Activated CD4-positive, alpha-beta T cell treated with anti-CD3 and anti-CD28 coated beads for 36 hours (primary cell): ENCODE measurements at regions of chr17 and their contacts with region 1.

Region 1: GRCh38 chr17:59331129-59331928 is at the start of gene YPEL2:
- DNase-seq: peak; percentile 93
- ATAC-seq: peak; percentile 95
- H3K4me3 Mint-ChIP-seq: peak within 1 kb of the TSS; percentile 81
- H3K27ac Mint-ChIP-seq: peak within 1 kb of the TSS; percentile 75
- H3K4me1 Mint-ChIP-seq: peaks cover 68% of the 10 kb centered on the region
- H3K27me3 Mint-ChIP-seq: no peaks in the 10 kb centered on the region
- total RNA-seq, gene YPEL2: 4.3 to 6.9 TPM

Region 2: GRCh38 chr17:59106463-59107305 is 224.6 kb before region 1 on chr17 and contains the start of gene TRIM37:
- CTCF ChIA-PET with region 1: no interaction called
- POLR2A ChIA-PET with region 1: no interaction called
- intact Hi-C with region 1: loop called in 1 of 2 experiments (anchors 5 kb)
- DNase-seq: peak; percentile 99
- ATAC-seq: peak; percentile 95
- H3K4me3 Mint-ChIP-seq: peak within 1 kb of the TSS; percentile 85
- H3K27ac Mint-ChIP-seq: peak within 1 kb of the TSS; percentile 92
- H3K4me1 Mint-ChIP-seq: peaks cover 49% of the 10 kb centered on the region
- H3K27me3 Mint-ChIP-seq: no peaks in the 10 kb centered on the region
- total RNA-seq, gene TRIM37: 21.3 to 22.7 TPM

Region 3: GRCh38 chr17:59220376-59221158 is 110.8 kb before region 1 on chr17 and contains the start of gene GDPD1:
- CTCF ChIA-PET with region 1: interaction called, 4 read pairs
- POLR2A ChIA-PET with region 1: no interaction called
- intact Hi-C with region 1: loop called in 1 of 2 experiments (anchors 1 kb)
- DNase-seq: peak; percentile 99
- ATAC-seq: peak; percentile 99
- H3K4me3 Mint-ChIP-seq: peak within 1 kb of the TSS; percentile 93
- H3K27ac Mint-ChIP-seq: peak within 1 kb of the TSS; percentile 86
- H3K4me1 Mint-ChIP-seq: peaks cover 12% of the 10 kb centered on the region
- H3K27me3 Mint-ChIP-seq: no peaks in the 10 kb centered on the region
- total RNA-seq, gene GDPD1: 2.5 to 2.7 TPM

Region 4: DNA sequence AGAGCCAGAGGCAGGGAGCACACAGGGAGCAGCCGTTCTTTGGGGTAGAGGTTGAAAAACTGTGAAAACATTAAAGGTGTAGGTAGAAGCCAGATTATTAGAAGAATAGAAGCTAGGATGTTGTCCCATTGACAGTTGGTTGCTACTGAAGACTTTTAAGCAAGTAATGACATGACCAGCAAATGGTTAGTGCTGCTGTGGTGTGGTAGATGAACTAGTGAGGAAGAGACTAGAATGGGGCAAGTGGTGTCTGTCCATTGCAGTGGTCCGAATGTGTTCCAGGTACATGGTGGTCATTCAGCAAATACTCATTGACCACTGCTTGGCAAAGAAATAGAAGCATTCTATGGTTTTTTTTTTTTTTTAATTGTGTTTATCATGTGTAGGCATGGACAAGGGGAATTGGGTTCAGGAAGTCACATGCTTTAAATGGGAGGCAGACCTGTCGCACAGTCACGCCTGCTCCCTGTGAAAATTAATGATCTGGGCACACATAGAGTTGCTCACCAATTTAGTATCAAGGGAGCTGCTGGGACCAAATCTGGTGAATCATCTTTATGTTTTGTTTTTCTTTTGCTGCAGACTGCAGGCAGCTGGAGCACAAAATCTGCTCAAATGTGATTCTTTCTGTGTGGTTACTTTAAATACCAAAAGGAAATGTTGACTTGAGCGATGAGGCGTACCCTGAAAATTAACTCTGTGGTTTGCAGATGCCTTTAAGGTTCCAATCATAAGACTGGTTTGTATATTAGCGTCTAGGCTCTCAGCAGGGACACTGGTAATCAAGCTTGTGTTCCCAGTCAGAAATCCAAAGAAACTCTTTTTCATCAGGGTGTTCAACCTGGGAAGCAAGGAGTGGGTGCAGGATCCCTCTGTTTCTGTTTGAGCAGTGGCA is 30.8 kb after region 1 on chr17:
- CTCF ChIA-PET with region 1: interaction called, 9 read pairs
- POLR2A ChIA-PET with region 1: no interaction called
- intact Hi-C with region 1: loop called (anchors 1 to 2 kb)
- DNase-seq: peak; percentile 55
- ATAC-seq: peak; percentile 73
- H3K4me3 Mint-ChIP-seq: peak overlapping the region; percentile 60
- H3K27ac Mint-ChIP-seq: peak overlapping the region; percentile 96
- H3K4me1 Mint-ChIP-seq: peaks cover 78% of the 10 kb centered on the region
- H3K27me3 Mint-ChIP-seq: no peaks in the 10 kb centered on the region

Region 5: GRCh38 chr17:59427425-59427921 is 96.1 kb after region 1 on chr17:
- CTCF ChIA-PET with region 1: interaction called, 14 read pairs
- POLR2A ChIA-PET with region 1: interaction called, 3 read pairs
- intact Hi-C with region 1: loop called in 1 of 2 experiments (anchors 1 kb)
- DNase-seq: peak; percentile 81
- ATAC-seq: peak; percentile 99
- H3K4me3 Mint-ChIP-seq: no peak overlapping the region
- H3K27ac Mint-ChIP-seq: no peak overlapping the region
- H3K4me1 Mint-ChIP-seq: peaks cover 25% of the 10 kb centered on the region
- H3K27me3 Mint-ChIP-seq: peaks cover 3% of the 10 kb centered on the region

Region 6: GRCh38 chr17:59440784-59441441 is 109.6 kb after region 1 on chr17:
- CTCF ChIA-PET with region 1: interaction called, 59 read pairs
- POLR2A ChIA-PET with region 1: interaction called, 4 read pairs
- intact Hi-C with region 1: loop called (anchors 1 kb)
- DNase-seq: peak; percentile 94
- ATAC-seq: peak; percentile 95
- H3K4me3 Mint-ChIP-seq: peak overlapping the region; percentile 57
- H3K27ac Mint-ChIP-seq: peak overlapping the region; percentile 90
- H3K4me1 Mint-ChIP-seq: peaks cover 53% of the 10 kb centered on the region
- H3K27me3 Mint-ChIP-seq: peaks cover 3% of the 10 kb centered on the region

Region 7: GRCh38 chr17:59707114-59707970 is 376.0 kb after region 1 on chr17 and contains the starts of genes PTRH2 and VMP1:
- CTCF ChIA-PET with region 1: no interaction called
- POLR2A ChIA-PET with region 1: no interaction called
- intact Hi-C with region 1: no loop called
- DNase-seq: peak; percentile 97
- ATAC-seq: peak; percentile 99
- H3K4me3 Mint-ChIP-seq: peak within 1 kb of the TSS; percentile 92
- H3K27ac Mint-ChIP-seq: peak within 1 kb of the TSS; percentile 96
- H3K4me1 Mint-ChIP-seq: peaks cover 60% of the 10 kb centered on the region
- H3K27me3 Mint-ChIP-seq: no peaks in the 10 kb centered on the region
- total RNA-seq, gene PTRH2: 41.7 to 54.7 TPM
- total RNA-seq, gene VMP1: 378 to 402 TPM